ENCODE measurements at regions of chr18 and their contacts with region 1.

Region 1: DNA sequence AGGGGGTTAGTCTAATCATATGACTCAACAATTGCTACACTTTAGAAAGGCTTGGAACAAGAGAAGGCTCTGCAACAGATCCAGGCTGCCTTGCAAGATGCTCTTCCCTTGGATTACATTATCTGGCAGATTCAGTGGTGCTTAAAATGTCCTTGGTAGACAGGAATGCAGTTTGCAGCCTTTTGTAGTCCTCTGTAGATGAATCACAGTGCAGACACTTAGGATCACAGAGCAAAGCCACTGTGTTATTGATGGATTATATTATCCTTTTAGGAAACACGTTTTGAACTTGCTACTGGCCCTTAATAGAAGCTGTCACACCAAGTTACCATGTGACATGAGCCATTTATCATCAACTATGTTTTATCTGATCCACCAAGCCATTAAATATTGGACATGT is 152.2 kb downstream of the CBLN2 start:
- DNase-seq: no peak

Region 2: DNA sequence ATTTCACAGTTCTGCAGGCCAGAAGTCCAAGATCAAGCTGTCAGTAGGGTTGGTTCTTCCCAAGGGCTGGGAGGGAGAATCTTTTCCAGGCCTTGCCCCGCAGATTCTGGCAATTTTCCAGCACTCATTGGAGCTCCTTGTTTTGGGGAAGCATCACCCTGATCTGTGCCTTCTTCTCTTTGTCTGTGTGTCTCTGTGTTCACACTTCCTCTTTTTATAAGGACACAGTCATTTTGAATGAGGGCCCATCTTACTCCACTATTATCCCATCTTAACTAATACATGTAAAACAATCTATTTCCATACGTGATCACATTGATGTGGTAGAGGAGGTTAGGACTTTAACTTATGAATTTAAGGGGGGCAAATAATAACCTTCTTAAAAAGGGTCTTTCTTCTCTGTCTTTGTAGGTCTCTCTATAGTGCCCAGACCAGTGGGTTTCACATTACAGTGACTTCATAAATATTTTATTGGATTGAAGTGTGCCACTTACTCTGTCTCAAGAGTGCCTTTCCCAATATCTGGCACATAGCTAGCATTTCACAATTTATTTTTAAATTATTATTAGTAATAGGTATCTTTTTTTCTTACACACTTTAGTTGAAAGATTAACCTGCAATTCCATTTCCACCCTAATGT is 221.1 kb after region 1 on chr18:
- intact Hi-C with region 1: no loop called
- DNase-seq: no peak

Region 3: GRCh38 chr18:73258375-73259087 is 866.6 kb after region 1 on chr18:
- intact Hi-C with region 1: loop called in 1 of 2 experiments (anchors 5 kb)
- DNase-seq: no peak

Measured in posterior vena cava (tissue), 2 donors.